ENCODE measurements at regions of chr1 and their contacts with region 1.

Region 1: GRCh38 chr1:193059268-193060225 is at the starts of genes RO60 and UCHL5:
- DNase-seq: peak; percentile 95
- H3K4me3 Mint-ChIP-seq: peak within 1 kb of the TSS; percentile 94
- H3K27ac Mint-ChIP-seq: peak within 1 kb of the TSS; percentile 100
- H3K4me1 Mint-ChIP-seq: peaks cover 59% of the 10 kb centered on the region
- H3K27me3 Mint-ChIP-seq: no peaks in the 10 kb centered on the region
- total RNA-seq, gene RO60: 68.7 and 70.0 TPM in 2 replicates
- total RNA-seq, gene UCHL5: 88.1 and 93.1 TPM in 2 replicates

Region 2: DNA sequence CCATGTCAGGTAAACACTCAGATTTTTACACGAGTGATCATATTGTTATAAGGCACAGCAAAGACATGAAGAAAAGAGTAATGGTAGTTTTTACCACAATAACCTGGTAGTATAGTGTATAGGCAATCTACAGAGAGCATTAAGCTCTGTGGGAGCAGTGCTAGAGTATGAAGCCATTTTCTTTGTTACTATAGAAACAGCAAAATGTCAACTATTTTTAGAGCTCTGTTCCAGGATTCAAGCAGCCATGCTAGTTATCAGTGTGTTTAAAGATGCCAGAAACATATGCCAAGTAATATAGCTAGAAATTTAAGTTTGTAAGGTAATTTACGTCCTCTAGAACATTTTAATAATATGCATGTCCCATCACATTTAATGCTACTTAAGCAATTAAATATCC is 978.9 kb before region 1 on chr1:
- intact Hi-C with region 1: no loop called
- DNase-seq: no peak
- H3K4me3 Mint-ChIP-seq: no peak overlapping the region
- H3K27ac Mint-ChIP-seq: no peak overlapping the region
- H3K4me1 Mint-ChIP-seq: no peaks in the 10 kb centered on the region
- H3K27me3 Mint-ChIP-seq: no peaks in the 10 kb centered on the region

Region 3: DNA sequence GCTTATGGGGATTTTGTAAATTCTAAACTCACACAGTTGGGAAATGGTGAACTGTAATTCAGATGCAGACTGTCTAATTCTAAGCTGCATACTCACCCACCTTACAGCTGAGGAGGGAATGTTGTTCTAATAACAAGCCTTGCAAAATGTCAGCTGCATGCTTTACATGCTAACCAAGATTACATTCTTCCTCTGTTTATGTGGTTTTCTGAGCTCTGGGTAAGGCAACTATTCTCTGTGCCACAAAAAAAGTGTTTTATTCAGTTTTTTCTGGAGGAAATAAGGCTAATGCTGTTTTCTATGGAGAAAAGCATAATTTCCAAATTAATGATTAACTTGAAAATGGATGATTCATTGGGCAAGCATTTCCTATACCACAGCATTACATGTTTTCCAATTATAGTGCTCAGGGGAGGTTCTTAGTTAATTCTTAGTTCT is 358.7 kb before region 1 on chr1:
- intact Hi-C with region 1: no loop called
- DNase-seq: no peak
- H3K4me3 Mint-ChIP-seq: no peak overlapping the region
- H3K27ac Mint-ChIP-seq: no peak overlapping the region
- H3K4me1 Mint-ChIP-seq: no peaks in the 10 kb centered on the region
- H3K27me3 Mint-ChIP-seq: peaks cover 4% of the 10 kb centered on the region

Region 4: GRCh38 chr1:192983349-192983980 is 76.1 kb before region 1 on chr1:
- intact Hi-C with region 1: loop called (anchors 1 kb)
- DNase-seq: no peak
- H3K4me3 Mint-ChIP-seq: peak overlapping the region; percentile 41
- H3K27ac Mint-ChIP-seq: peak overlapping the region; percentile 88
- H3K4me1 Mint-ChIP-seq: peaks cover 56% of the 10 kb centered on the region
- H3K27me3 Mint-ChIP-seq: no peaks in the 10 kb centered on the region

Region 5: GRCh38 chr1:193019442-193020026 is 40.0 kb before region 1 on chr1:
- intact Hi-C with region 1: loop called (anchors 2 kb)
- DNase-seq: no peak
- H3K4me3 Mint-ChIP-seq: no peak overlapping the region
- H3K27ac Mint-ChIP-seq: no peak overlapping the region
- H3K4me1 Mint-ChIP-seq: no peaks in the 10 kb centered on the region
- H3K27me3 Mint-ChIP-seq: no peaks in the 10 kb centered on the region

Region 6: DNA sequence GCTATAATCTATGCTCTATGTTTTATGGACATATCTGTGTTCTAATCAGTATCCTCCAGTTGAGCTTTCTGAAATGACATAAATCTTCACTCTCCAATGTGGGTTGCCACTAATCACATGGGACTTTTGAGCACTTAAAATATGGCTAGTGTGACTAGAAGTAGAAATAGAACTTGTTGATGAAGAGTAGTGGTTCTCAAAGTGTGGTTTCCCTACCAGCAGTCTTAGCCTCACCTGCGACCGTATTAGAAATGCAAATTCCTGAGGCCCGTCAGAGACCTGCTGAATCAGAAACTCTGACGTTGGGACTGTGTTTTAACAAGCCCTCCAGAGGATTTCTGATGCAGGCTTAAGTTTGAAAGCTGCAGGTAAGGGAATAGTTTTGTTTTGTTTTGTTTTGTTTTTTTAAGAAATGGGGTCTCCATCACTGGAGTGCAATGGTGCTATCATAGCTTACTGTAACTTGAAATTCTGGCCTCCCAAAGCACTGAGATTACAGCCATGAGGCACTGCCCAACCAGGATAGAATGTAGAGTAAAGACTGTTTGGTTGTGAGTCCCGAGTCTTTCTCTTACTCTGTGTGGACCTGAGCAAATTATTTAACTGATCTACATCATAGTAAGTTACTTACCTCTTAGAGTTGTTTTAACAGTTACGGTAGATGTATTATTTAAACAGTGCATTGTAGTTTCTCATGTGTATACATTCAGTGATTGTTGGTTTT is 24.0 kb after region 1 on chr1:
- intact Hi-C with region 1: no loop called
- DNase-seq: no peak
- H3K4me3 Mint-ChIP-seq: no peak overlapping the region
- H3K27ac Mint-ChIP-seq: no peak overlapping the region
- H3K4me1 Mint-ChIP-seq: no peaks in the 10 kb centered on the region
- H3K27me3 Mint-ChIP-seq: no peaks in the 10 kb centered on the region

Region 7: DNA sequence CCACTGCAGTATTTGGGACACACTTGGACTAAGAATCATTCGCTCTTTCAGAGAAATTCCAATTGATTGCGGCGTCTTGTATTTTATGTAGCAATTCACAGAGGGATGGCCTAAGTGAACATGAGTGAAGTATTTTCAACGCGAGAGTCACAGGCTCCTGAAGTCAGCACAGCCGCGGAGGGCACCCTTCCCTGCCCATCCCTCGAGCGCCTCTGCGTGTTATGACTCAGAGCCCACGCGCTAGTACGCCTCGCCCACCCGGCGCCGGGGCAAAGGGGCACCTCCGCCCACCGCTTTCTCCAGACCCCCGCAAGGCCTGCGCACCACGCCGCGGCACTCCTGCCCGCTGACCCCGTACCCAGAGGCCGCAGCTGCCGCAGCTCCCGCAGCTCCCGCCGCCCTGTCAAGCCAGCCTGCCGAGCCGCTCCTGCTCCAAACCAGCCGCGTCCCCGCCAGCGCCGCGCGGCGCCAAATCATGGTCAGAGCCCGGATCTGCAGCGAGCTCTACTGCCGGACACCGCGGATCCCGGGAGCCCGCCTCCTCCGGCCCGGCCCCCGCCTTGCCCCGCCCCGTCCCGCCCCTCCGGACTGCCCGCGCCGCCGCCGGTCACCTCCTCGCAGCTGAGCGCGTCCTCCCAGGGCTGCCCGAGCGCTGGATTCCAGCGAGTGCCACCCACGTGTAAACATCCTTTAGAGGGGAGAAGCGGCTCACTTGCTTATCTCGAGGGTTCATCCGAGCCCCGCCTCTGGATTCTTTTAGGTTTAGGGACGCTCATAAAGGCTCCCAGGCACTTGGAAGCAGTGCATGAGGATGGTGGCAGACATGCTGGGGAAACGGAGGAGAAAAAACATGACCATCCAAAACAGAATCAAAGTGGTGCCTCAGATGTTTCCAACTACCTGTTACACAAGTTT is 45.6 kb after region 1 on chr1 and contains the start of gene GLRX2:
- intact Hi-C with region 1: loop called (anchors 1 kb)
- DNase-seq: peak; percentile 42
- H3K4me3 Mint-ChIP-seq: peak within 1 kb of the TSS; percentile 92
- H3K27ac Mint-ChIP-seq: peak within 1 kb of the TSS; percentile 77
- H3K4me1 Mint-ChIP-seq: peaks cover 24% of the 10 kb centered on the region
- H3K27me3 Mint-ChIP-seq: peaks cover 14% of the 10 kb centered on the region
- total RNA-seq, gene GLRX2: 29.6 and 32.9 TPM in 2 replicates

Region 8: DNA sequence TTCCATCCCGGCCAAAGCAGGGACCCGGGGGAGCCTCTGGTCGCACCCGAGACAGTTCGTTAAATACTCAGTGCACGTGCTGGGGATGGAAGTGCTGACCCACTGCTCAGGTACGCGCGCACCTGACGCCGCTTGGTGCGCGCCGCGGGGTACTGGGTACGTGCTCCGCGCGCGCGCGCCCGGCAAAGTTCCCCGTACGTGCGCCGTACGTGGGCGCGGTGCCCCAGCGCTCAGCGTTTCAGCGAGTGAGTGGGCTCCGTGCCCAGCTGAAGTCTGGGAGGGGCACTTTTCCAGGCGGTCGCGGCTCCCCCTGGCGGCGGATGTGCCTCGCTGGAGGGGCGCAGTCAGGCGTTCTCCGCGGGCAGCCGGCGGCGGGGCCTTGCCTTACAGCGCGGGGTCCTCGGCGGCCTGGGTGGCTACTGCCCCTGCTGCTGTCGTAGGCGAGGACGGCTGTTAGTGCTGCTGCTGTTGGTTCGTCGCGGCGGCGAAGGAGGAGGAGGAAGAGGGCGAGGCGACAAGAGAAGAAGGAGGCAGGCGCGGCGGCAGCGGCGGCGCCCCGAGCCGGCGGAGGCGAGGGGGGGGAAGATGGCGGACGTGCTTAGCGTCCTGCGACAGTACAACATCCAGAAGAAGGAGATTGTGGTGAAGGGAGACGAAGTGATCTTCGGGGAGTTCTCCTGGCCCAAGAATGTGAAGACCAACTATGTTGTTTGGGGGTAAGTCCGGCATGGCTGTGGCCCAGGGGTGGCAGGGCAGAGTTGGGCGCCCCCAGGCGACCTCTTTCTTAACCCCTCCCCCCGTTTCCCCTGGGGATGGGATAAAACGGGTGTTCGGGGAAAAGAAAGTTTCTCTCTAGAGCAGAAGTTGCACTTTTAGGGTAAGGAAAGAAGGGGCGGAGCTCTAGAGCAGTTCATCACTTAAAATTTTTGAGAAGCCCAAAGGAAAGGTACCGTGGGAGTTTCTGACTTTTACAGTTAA is 62.4 kb after region 1 on chr1 and contains the start of gene CDC73:
- intact Hi-C with region 1: loop called (anchors 1 kb)
- DNase-seq: peak; percentile 97
- H3K4me3 Mint-ChIP-seq: peak within 1 kb of the TSS; percentile 92
- H3K27ac Mint-ChIP-seq: peak within 1 kb of the TSS; percentile 88
- H3K4me1 Mint-ChIP-seq: peaks cover 62% of the 10 kb centered on the region
- H3K27me3 Mint-ChIP-seq: peaks cover 15% of the 10 kb centered on the region
- total RNA-seq, gene CDC73: 56.1 and 57.3 TPM in 2 replicates

Region 9: GRCh38 chr1:193417945-193418744 is 358.6 kb after region 1 on chr1:
- intact Hi-C with region 1: loop called (anchors 5 kb)
- DNase-seq: no peak
- H3K4me3 Mint-ChIP-seq: peak overlapping the region; percentile 36
- H3K27ac Mint-ChIP-seq: peak overlapping the region; percentile 40
- H3K4me1 Mint-ChIP-seq: peaks cover 56% of the 10 kb centered on the region
- H3K27me3 Mint-ChIP-seq: peaks cover 5% of the 10 kb centered on the region

Region 10: GRCh38 chr1:194295685-194296084 is 1236.1 kb after region 1 on chr1:
- intact Hi-C with region 1: loop called (anchors 1 kb)
- DNase-seq: peak; percentile 12
- H3K4me3 Mint-ChIP-seq: no peak overlapping the region
- H3K27ac Mint-ChIP-seq: no peak overlapping the region
- H3K4me1 Mint-ChIP-seq: peaks cover 18% of the 10 kb centered on the region
- H3K27me3 Mint-ChIP-seq: no peaks in the 10 kb centered on the region